ENCODE measurements at regions of chr5 and their contacts with region 1.

Region 1: DNA sequence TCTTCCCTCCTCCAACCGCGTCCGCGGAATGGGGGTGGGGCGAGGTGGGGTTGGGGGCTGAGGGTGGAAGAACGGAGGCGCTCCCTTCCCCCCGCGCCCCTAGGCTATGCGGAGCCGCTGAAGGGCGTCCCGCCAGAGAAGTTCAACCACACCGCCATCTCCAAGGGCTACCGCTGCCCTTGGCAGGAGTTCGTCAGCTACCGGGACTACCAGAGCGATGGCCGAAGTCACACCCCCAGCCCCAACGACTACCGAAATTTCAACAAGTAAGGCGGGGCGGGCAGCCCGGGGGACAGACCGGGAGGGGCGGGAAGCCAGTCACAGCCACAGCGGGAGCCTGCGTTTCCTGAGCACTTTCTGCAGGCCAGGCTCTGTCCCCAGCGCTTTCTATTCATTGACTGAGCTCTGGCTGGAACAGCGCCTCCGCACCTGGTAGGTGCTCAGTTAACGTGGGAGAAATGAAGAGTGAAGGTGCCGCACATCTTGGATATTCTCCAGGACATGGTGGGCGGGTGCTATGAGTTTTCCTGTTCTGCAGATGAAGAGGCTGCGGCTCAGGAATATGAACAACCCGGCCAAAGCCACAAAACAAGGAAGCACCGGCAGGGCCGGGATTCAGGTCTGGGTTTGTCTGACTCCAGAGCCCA is 11.3 kb downstream of the MYOZ3 start:
- DNase-seq: peak; percentile 30
- H3K4me3 Mint-ChIP-seq: peak overlapping the region; percentile 69
- H3K27ac Mint-ChIP-seq: peak overlapping the region; percentile 11
- H3K4me1 Mint-ChIP-seq: peaks cover 8% of the 10 kb centered on the region
- H3K27me3 Mint-ChIP-seq: peaks cover 24% of the 10 kb centered on the region

Region 2: DNA sequence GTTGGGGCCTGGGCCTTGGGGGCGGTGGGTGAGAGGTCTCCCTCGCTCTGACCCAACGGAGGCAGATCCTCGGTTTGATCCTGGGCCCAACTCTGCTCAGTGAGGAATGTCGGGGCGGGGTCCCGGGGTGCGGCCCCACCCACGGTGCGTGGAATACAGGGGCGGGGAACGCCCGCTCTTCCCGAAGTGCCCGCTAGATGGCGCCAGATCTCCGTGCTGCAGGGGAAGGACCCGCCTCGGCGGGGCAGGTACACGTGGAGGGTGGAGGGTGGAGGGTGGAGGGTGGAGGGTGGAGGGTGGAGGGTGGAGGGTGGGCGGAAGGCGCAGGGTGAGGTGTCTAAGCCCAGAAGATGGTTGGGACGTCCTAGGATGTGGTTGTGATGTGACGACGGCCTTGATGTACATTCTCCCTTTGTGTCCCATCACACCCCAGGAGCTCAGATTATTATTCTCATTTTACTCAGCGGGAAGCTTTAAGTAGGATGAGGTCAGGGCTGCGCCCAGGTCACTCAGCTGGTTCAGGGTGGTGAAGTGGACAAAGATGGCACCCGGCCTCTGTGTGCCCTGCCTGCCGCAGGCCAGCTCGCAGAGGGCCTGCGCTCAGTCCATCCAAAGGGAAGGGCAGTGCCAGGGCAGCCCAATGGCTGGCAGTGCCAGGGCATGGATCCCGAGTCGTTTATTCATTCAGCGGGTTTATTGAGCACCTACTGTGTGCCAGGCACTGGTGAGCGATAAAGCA is 213.4 kb before region 1 on chr5:
- CTCF ChIA-PET with region 1: no interaction called
- POLR2A ChIA-PET with region 1: no interaction called
- DNase-seq: peak; percentile 86
- H3K4me3 Mint-ChIP-seq: peak overlapping the region; percentile 36
- H3K27ac Mint-ChIP-seq: peak overlapping the region; percentile 84
- H3K4me1 Mint-ChIP-seq: peaks cover 43% of the 10 kb centered on the region
- H3K27me3 Mint-ChIP-seq: no peaks in the 10 kb centered on the region

Region 3: GRCh38 chr5:150656191-150657132 is 15.9 kb before region 1 on chr5:
- CTCF ChIA-PET with region 1: interaction called, 11 read pairs
- POLR2A ChIA-PET with region 1: no interaction called
- DNase-seq: peak; percentile 78
- H3K4me3 Mint-ChIP-seq: peak overlapping the region; percentile 69
- H3K27ac Mint-ChIP-seq: peak overlapping the region; percentile 65
- H3K4me1 Mint-ChIP-seq: peaks cover 7% of the 10 kb centered on the region
- H3K27me3 Mint-ChIP-seq: peaks cover 3% of the 10 kb centered on the region